CD14-positive monocyte (primary cell): ENCODE measurements at regions of chr19 and their contacts with region 1.

Region 1: GRCh38 chr19:13731147-13731964 is 33.0 kb upstream of the MRI1 start:
- DNase-seq: peak; percentile 89 to 97 (median 94)
- H3K4me3 ChIP-seq: peak overlapping the region; percentile 42 to 91 (median 59)
- H3K4me3 Mint-ChIP-seq: peak overlapping the region; percentile 76 to 92
- H3K27ac ChIP-seq: peak overlapping the region; percentile 92 to 96
- H3K27ac Mint-ChIP-seq: peak overlapping the region; percentile 98 to 100 (median 100)
- H3K4me1 ChIP-seq: peaks cover 40 to 42% of the 10 kb centered on the region in 2 donors
- H3K4me1 Mint-ChIP-seq: peaks cover 32% of the 10 kb centered on the region
- H3K27me3 ChIP-seq: no peaks in the 10 kb centered on the region
- H3K27me3 Mint-ChIP-seq: peaks cover 0 to 1% (median 0%) of the 10 kb centered on the region in 3 donors
- CTCF ChIP-seq: no peak

Region 2: DNA sequence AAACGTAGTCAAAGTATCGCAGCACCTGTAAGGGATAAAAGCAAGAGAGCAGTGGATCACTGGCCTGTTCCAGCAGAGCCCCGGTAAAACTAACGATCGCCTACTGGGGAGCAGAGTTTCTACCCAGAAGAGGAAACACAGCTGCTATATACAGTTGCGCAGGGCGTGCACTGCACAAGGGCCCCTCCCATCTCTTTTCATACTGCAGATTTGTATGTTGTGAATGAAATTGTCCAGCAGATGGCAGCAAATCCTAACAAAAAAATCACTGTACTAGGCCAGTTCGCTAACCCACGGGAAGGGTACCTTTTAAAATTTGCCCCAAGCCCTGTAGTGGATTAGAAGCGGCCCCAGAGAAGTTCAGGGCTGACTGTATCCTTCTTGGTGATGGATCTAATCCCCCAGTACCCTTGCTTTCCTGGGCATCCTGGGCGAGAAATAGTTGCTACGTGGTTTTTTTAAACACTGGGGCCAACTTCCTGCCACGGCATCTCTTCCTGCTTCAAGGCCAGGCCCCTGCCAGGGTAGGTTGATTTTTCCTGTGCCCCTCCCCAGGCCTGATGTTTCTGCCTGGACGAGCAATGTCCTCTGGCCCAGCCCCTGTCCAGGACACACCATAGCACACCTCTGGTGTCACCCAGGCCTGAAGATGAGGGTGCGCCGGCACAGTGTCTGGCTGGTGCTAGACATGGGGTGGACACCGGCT is 454.1 kb before region 1 on chr19:
- intact Hi-C with region 1: loop called in 1 of 2 experiments (anchors 10 kb)
- DNase-seq: peak; percentile 69 to 75 (median 73)
- H3K4me3 ChIP-seq: peak overlapping the region in 1 of 3 experiments; percentile 47
- H3K4me3 Mint-ChIP-seq: peak overlapping the region; percentile 24 to 58
- H3K27ac ChIP-seq: no peak overlapping the region
- H3K27ac Mint-ChIP-seq: peak overlapping the region in 2 of 7 donors; percentile 5 to 49
- H3K4me1 ChIP-seq: peaks cover 4 to 6% of the 10 kb centered on the region in 2 donors
- H3K4me1 Mint-ChIP-seq: peaks cover 10% of the 10 kb centered on the region
- H3K27me3 ChIP-seq: no peaks in the 10 kb centered on the region
- H3K27me3 Mint-ChIP-seq: peaks cover 8 to 12% (median 10%) of the 10 kb centered on the region in 3 donors
- CTCF ChIP-seq: peak; percentile 71

Region 3: DNA sequence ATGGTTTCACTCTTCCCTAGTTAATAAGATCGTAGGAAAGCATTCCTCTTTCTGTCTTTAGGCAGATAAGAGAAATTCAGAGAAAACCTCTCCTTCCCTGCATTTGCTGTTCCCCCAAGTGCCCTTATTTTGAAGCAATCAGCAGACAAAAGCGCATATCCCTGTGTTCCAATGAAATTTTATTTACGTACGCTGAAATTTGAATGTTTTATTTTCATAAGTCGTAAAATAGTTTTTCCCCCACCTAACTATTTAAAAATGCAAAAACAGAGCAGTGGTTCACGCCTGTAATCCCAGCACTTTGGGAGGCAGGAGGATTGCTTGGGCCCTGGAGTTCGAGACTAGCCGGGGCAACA is 15.7 kb after region 1 on chr19:
- intact Hi-C with region 1: loop called in 1 of 2 experiments (anchors 2 kb)
- DNase-seq: no peak
- H3K4me3 ChIP-seq: peak overlapping the region in 1 of 3 experiments; percentile 96
- H3K4me3 Mint-ChIP-seq: peak overlapping the region in 1 of 2 donors; percentile 59
- H3K27ac ChIP-seq: no peak overlapping the region
- H3K27ac Mint-ChIP-seq: peak overlapping the region in 6 of 7 donors; percentile 42 to 90 (median 80)
- H3K4me1 ChIP-seq: peaks cover 18 to 19% of the 10 kb centered on the region in 2 donors
- H3K4me1 Mint-ChIP-seq: peaks cover 15% of the 10 kb centered on the region
- H3K27me3 ChIP-seq: no peaks in the 10 kb centered on the region
- H3K27me3 Mint-ChIP-seq: no peaks in the 10 kb centered on the region
- CTCF ChIP-seq: no peak

Region 4: GRCh38 chr19:13774217-13775191 is 43.1 kb after region 1 on chr19 and contains the start of gene C19orf53:
- intact Hi-C with region 1: loop called in 1 of 2 experiments (anchors 1 kb)
- DNase-seq: peak; percentile 78 to 84 (median 83)
- H3K4me3 ChIP-seq: peak within 1 kb of the TSS; percentile 53 to 96 (median 78)
- H3K4me3 Mint-ChIP-seq: peak within 1 kb of the TSS; percentile 93 to 97
- H3K27ac ChIP-seq: peak within 1 kb of the TSS; percentile 36 to 82
- H3K27ac Mint-ChIP-seq: peak within 1 kb of the TSS; percentile 86 to 97 (median 93)
- H3K4me1 ChIP-seq: peaks cover 9 to 12% of the 10 kb centered on the region in 2 donors
- H3K4me1 Mint-ChIP-seq: peaks cover 21% of the 10 kb centered on the region
- H3K27me3 ChIP-seq: no peaks in the 10 kb centered on the region
- H3K27me3 Mint-ChIP-seq: peaks cover 0 to 2% (median 0%) of the 10 kb centered on the region in 3 donors
- CTCF ChIP-seq: no peak
- polyA plus RNA-seq, gene C19orf53: 125 to 156 (median 132) TPM

Region 5: GRCh38 chr19:13794757-13795589 is 63.6 kb after region 1 on chr19 and contains the start of gene ZSWIM4:
- intact Hi-C with region 1: loop called in 1 of 2 experiments (anchors 5 kb)
- DNase-seq: peak; percentile 98
- H3K4me3 ChIP-seq: peak within 1 kb of the TSS; percentile 57 to 91 (median 88)
- H3K4me3 Mint-ChIP-seq: peak within 1 kb of the TSS; percentile 95 to 98
- H3K27ac ChIP-seq: peak within 1 kb of the TSS; percentile 29 to 90
- H3K27ac Mint-ChIP-seq: peak within 1 kb of the TSS; percentile 85 to 98 (median 95)
- H3K4me1 ChIP-seq: peaks cover 32 to 33% of the 10 kb centered on the region in 2 donors
- H3K4me1 Mint-ChIP-seq: peaks cover 38% of the 10 kb centered on the region
- H3K27me3 ChIP-seq: no peaks in the 10 kb centered on the region
- H3K27me3 Mint-ChIP-seq: peaks cover 0 to 9% (median 0%) of the 10 kb centered on the region in 3 donors
- CTCF ChIP-seq: no peak
- polyA plus RNA-seq, gene ZSWIM4: 0.19 to 1.1 (median 0.23) TPM

Region 6: DNA sequence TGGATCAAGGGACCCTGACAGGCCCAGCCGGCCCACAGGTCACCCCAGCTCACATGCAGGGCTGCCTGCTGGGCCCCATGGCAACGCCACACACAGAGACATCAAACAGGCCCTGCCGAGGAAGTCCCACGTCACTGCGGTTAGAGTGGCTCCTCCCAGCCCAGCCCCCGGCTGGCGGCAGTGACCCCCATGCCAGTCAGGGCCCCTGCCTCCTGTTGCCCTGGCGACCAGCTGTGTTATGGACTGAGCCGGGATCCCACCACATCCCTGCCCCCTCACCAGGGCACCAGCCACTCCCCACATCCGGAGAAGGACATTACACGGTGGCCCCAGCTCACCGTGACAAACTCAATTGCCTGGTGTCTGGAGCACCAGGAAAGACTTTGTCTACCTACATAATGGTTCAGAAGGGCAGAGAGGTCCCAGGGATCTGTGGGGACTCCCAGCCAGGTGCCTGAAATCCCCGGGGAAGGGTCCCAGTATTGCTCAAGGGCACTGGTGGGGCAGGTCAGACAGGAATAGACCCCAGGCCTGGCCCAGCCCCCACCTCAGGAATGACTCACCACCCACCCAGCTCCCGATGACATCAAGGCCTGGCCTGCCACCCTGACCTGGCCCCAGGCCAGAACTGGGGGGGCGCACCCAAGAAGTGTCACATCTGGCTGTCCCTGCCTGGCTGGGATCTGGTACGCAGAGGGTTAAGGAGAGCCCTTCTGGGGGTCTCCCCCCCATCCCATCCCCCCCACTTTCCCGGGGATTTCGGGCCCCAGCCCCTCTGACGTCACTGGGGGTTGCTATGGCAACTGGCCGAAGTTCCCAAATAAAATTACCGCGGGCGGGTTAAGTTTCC is 115.4 kb after region 1 on chr19:
- intact Hi-C with region 1: loop called in 1 of 2 experiments (anchors 5 kb)
- DNase-seq: peak; percentile 98 to 99 (median 99)
- H3K4me3 ChIP-seq: peak overlapping the region; percentile 39 to 65 (median 63)
- H3K4me3 Mint-ChIP-seq: peak overlapping the region; percentile 78 to 85
- H3K27ac ChIP-seq: peak overlapping the region; percentile 99
- H3K27ac Mint-ChIP-seq: peak overlapping the region; percentile 99 to 100 (median 100)
- H3K4me1 ChIP-seq: peaks cover 67 to 68% of the 10 kb centered on the region in 2 donors
- H3K4me1 Mint-ChIP-seq: peaks cover 66% of the 10 kb centered on the region
- H3K27me3 ChIP-seq: no peaks in the 10 kb centered on the region
- H3K27me3 Mint-ChIP-seq: peaks cover 0 to 5% (median 0%) of the 10 kb centered on the region in 3 donors
- CTCF ChIP-seq: no peak